GM12878 (cell line): ENCODE measurements at regions of chr11 and their contacts with region 1.

Region 1: DNA sequence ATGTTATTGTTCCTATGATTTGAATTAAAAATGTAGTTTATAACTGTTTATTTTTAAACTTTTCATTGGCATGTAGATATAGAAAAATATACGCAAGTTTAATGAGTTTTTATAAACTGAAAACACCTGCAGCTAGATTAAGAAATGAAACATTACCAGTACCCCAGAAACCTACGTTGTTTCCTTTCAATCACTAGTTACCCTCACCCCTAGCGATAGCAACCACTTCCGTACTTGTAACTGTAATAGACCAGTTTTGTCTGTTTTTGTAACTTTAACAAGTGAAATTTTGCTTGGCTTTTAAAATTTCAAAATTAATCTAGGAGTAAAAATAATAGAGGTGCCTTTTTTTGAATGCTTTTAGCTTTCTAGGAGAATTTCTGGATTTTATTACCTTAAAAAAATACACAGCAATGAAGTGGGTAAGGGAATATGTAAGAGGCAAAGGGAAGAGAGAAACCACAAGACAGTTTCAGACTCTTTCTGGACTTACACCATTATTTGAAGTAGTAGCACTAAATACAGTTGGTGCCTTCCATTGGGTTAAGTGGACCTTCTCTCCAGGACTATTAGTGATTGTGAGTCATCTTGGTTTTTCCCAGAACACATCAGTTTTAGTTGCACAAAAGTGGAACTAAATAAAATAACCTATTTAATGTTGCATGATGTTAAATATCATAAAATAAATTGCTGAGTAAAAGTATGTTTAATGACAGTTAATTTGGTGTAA is 18.7 kb upstream of the NAT10 start:
- DNase-seq: no peak
- ATAC-seq: peak; percentile 44; the same call in 2 of the 3 replicates
- H3K4me3 ChIP-seq: no peak overlapping the region
- H3K27ac ChIP-seq: no peak overlapping the region
- H3K4me1 ChIP-seq: no peaks in the 10 kb centered on the region
- H3K27me3 ChIP-seq: no peaks in the 10 kb centered on the region
- CTCF ChIP-seq: no peak
- EP300 ChIP-seq: no peak
- POLR2A ChIP-seq: no peak
- RAD21 ChIP-seq: no peak

Region 2: DNA sequence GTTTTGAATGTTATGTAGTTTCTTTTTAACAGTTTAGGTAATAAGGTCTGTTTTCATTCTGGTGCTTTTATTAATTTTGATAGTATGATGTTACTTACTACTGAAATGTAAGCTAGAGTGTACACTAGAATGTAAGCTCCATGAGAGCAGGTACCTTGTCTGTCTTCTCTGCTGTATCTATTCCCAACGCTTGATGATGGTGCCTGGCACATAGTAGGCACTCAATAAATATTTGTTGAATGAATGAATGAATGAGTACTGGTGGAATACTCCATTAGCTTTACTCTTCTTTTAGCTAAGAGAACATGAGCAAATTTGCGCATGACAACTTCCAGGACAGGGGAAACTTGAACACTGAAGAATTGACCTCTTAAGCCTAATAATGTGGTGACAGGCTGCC is 12.1 kb after region 1 on chr11:
- CTCF ChIA-PET with region 1: interaction called, 7 read pairs
- POLR2A ChIA-PET with region 1: interaction called, 5 read pairs
- RAD21 ChIA-PET with region 1: no interaction called
- SMC1A ChIA-PET with region 1: interaction called, 11 read pairs
- in situ Hi-C with region 1: no loop called
- intact Hi-C with region 1: no loop called
- DNase-seq: no peak
- ATAC-seq: no peak
- H3K4me3 ChIP-seq: no peak overlapping the region
- H3K27ac ChIP-seq: no peak overlapping the region
- H3K4me1 ChIP-seq: peaks cover 2% of the 10 kb centered on the region
- H3K27me3 ChIP-seq: no peaks in the 10 kb centered on the region
- CTCF ChIP-seq: no peak
- EP300 ChIP-seq: no peak
- POLR2A ChIP-seq: no peak
- RAD21 ChIP-seq: no peak

Region 3: DNA sequence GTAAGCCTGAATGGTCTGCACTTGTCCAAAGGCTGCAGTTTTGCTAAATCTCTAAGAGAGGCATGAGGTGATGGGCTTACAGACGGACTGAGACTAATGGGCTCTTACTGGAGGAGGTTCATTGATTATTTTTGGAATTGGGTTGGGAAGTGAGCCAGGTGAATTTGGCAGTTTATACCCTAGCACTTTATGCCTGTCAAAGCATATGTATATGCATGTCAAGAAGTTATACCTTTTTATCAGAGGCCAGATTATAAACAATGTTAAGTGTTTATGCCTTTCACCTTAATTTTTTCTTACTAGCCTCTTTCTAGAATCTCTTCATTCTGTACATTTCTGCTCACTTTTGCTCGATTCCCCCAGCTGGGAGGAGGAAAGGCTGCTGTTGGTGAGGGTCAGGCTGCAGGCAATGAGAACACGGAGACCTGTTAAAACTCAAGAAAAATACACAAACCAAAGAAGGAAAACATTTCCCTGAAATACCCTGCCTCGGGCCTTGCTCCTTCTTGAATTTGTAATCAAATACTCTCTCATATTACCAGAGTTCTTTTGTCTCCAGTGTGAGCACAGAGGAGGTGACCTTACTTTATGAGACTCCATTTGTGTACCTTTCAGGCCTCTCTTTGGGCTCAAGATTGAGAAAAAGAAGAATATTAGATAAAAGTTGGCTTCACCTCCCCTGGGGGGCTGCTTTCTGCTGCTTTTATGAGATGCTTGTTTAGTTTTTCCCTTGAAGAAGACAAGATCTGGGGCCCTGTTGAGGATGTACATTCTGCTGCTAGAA is 38.4 kb after region 1 on chr11:
- CTCF ChIA-PET with region 1: no interaction called
- POLR2A ChIA-PET with region 1: no interaction called
- RAD21 ChIA-PET with region 1: no interaction called
- SMC1A ChIA-PET with region 1: no interaction called
- in situ Hi-C with region 1: no loop called
- intact Hi-C with region 1: no loop called
- DNase-seq: no peak
- ATAC-seq: no peak
- H3K4me3 ChIP-seq: no peak overlapping the region
- H3K27ac ChIP-seq: no peak overlapping the region
- H3K4me1 ChIP-seq: no peaks in the 10 kb centered on the region
- H3K27me3 ChIP-seq: no peaks in the 10 kb centered on the region
- CTCF ChIP-seq: no peak
- EP300 ChIP-seq: no peak
- POLR2A ChIP-seq: no peak
- RAD21 ChIP-seq: no peak